ENCODE measurements at regions of chr6 and their contacts with region 1.

Region 1: DNA sequence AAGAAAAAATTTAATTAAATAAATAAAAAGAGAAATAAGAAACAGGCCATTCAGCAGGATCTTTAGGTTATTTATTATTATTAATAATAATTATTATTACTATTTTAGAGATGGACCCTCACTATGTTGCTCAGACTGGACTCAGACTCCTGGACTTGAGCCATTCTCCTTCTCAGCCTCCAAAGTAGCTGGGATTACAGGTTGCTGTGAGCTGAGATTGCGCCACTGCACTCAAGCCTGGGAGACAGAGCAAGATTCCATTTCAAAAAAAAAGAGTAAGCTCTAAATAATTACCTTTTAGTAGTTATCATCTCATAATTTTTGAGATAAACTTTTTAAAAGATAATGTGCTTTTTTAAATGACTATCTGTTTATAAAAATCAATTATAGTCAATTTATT is 1102.8 kb upstream of the GJE1 start:
- DNase-seq: no peak
- ATAC-seq: no peak
- H3K4me3 ChIP-seq: no peak overlapping the region
- H3K27ac ChIP-seq: no peak overlapping the region
- H3K4me1 ChIP-seq: no peaks in the 10 kb centered on the region
- H3K27me3 ChIP-seq: no peaks in the 10 kb centered on the region
- CTCF ChIP-seq: no peak

Region 2: GRCh38 chr6:141057761-141058160 is 27.9 kb after region 1 on chr6:
- intact Hi-C with region 1: loop called in 1 of 10 experiments (anchors 1 kb)
- DNase-seq: no peak
- ATAC-seq: no peak
- H3K4me3 ChIP-seq: no peak overlapping the region
- H3K27ac ChIP-seq: no peak overlapping the region
- H3K4me1 ChIP-seq: no peaks in the 10 kb centered on the region
- H3K27me3 ChIP-seq: no peaks in the 10 kb centered on the region
- CTCF ChIP-seq: no peak